Activated CD8-positive, alpha-beta T cell treated with anti-CD3 and anti-CD28 coated beads, Interleukin-2, amount 10 ng/mL, durations not matched to agents 7 days and 5 days (primary cell): ENCODE measurements at regions of chr4 and their contacts with region 1.

Region 1: DNA sequence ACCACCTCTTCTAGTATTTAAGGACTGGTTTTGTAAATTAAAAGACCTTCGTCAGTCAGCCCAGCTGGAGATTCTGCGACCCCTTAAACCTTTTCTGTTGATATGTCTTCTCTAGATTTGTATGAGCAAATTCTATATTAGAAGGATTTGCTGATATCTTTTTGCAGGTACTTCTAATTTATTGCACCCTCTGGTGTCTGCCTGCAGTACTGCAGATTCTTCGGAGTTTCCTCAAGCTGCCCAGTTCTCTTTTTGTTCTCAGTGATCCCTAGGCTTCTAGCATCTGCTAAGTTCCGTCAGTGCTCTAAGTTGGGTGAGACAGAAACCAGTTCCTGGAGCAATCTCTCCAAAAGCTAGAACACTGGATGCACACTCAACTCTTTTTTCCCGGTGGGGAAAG is 545.2 kb downstream of the C4orf33 start:
- DNase-seq: peak; percentile 63
- ATAC-seq: no peak
- H3K4me3 Mint-ChIP-seq: no peak overlapping the region
- H3K27ac Mint-ChIP-seq: no peak overlapping the region
- H3K4me1 Mint-ChIP-seq: no peaks in the 10 kb centered on the region
- H3K27me3 Mint-ChIP-seq: no peaks in the 10 kb centered on the region

Region 2: DNA sequence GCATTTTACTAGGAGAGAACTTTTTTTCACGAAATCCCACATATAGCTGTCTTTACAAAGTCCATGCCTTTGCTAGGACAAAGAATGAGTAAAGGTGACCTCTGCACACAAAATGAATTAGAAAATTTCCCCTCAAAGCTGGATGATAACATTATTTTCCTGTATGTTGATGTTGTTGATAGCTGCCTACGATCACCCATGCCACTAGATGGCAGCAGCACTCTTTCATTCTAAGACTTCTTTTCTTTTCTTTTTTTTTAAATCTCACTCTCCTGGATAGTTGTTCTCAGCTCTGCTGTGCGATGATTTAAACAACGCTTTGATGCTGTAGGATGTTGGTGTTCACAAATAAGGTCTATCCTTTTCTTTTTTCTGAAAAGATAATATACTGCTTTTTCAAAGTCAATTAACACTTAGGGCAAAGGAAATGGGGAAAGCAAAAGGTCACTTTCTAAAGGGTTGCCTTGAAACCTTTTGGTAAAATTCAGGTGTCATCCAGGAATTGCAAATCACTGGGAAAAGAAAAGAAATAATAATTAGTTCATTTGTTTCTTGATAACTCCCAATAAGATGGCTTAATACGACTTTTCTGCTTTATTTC is 278.4 kb before region 1 on chr4:
- CTCF ChIA-PET with region 1: interaction called, 23 read pairs
- POLR2A ChIA-PET with region 1: no interaction called
- DNase-seq: peak; percentile 65
- ATAC-seq: peak; percentile 36
- H3K4me3 Mint-ChIP-seq: no peak overlapping the region
- H3K27ac Mint-ChIP-seq: no peak overlapping the region
- H3K4me1 Mint-ChIP-seq: no peaks in the 10 kb centered on the region
- H3K27me3 Mint-ChIP-seq: peaks cover 5% of the 10 kb centered on the region

Region 3: GRCh38 chr4:129603241-129603931 is 37.8 kb before region 1 on chr4:
- CTCF ChIA-PET with region 1: no interaction called
- POLR2A ChIA-PET with region 1: no interaction called
- DNase-seq: no peak
- ATAC-seq: no peak
- H3K4me3 Mint-ChIP-seq: no peak overlapping the region
- H3K27ac Mint-ChIP-seq: no peak overlapping the region
- H3K4me1 Mint-ChIP-seq: no peaks in the 10 kb centered on the region
- H3K27me3 Mint-ChIP-seq: no peaks in the 10 kb centered on the region